ENCODE measurements at regions of chr9 and their contacts with region 1.

Region 1: GRCh38 chr9:6757456-6758247 is at the start of gene KDM4C:
- DNase-seq: peak; percentile 90 to 96
- ATAC-seq: peak; percentile 88 to 92
- H3K4me3 ChIP-seq: peak within 1 kb of the TSS; percentile 81 to 100 (median 94)
- H3K27ac ChIP-seq: peak within 1 kb of the TSS; percentile 94 to 100 (median 98)
- H3K4me1 ChIP-seq: peaks cover 6 to 10% of the 10 kb centered on the region in 2 donors
- H3K27me3 ChIP-seq: no peaks in the 10 kb centered on the region
- CTCF ChIP-seq: peak in 2 of 5 experiments; percentile 40 to 63
- POLR2A ChIP-seq: peak; percentile 88 to 97
- total RNA-seq, gene KDM4C: 7.7 to 23.3 (median 10.0) TPM

Region 2: GRCh38 chr9:6015278-6016157 is 742.1 kb before region 1 on chr9 and contains the start of gene RANBP6:
- in situ Hi-C with region 1: no loop called
- intact Hi-C with region 1: loop called (anchors 2 kb)
- DNase-seq: peak; percentile 85 to 86
- ATAC-seq: peak; percentile 98
- H3K4me3 ChIP-seq: peak within 1 kb of the TSS; percentile 73 to 89 (median 88)
- H3K27ac ChIP-seq: peak within 1 kb of the TSS; percentile 83 to 91 (median 86)
- H3K4me1 ChIP-seq: peaks cover 43 to 47% of the 10 kb centered on the region in 2 donors
- H3K27me3 ChIP-seq: no peaks in the 10 kb centered on the region
- CTCF ChIP-seq: no peak
- POLR2A ChIP-seq: peak; percentile 20 to 68
- total RNA-seq, gene RANBP6: 8.1 to 21.0 (median 16.9) TPM

Region 3: DNA sequence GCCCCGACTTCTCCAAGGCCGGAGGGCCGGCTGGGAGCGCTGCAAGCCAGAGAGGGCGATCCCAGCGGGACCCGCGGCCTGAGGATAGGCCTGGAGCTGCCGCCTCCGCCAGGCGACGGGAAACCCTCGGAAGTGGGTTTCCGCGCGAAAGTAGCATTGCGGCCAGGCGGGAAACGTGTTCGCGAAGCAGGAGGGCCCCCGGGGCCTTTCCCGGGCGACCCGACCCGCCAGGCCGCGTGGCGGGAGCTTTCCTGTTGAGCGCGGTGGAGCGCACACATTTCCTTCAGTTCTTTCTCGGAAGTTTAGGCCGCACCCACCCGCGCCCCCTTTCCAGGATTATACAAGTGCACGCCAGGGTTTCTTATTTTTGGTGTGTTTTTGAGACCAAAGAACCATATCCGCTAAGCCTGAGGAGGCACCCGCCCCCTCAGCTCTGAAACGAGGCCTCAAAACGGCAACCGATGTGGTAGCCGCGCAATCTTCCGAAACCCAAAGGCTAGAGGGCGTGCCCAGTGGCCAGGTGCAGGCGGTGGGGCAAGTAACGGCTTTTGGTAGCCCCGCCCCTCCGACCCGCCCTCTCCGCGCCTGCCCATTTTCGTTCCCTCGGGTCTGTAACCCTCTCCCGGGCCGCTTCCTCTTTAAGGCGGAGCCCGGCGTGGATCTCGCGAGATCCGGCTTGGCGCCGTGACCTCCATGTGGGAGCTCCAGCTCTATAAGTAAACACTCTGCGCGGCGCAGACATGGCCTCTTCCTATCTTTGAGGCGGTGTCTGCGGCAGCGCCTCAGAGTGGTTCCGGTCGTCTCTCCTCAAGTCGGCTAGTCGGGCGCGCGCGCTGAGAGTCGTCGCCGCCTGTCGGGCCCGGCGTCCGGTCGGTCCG is 344.9 kb before region 1 on chr9 and contains the start of gene UHRF2:
- in situ Hi-C with region 1: no loop called
- intact Hi-C with region 1: loop called (anchors 2 kb)
- DNase-seq: peak; percentile 96 to 98
- ATAC-seq: peak; percentile 95 to 96
- H3K4me3 ChIP-seq: peak within 1 kb of the TSS; percentile 80 to 86 (median 84)
- H3K27ac ChIP-seq: peak within 1 kb of the TSS; percentile 80 to 86 (median 83)
- H3K4me1 ChIP-seq: peaks cover 18 to 21% of the 10 kb centered on the region in 2 donors
- H3K27me3 ChIP-seq: no peaks in the 10 kb centered on the region
- CTCF ChIP-seq: peak in 1 of 5 experiments; percentile 15
- POLR2A ChIP-seq: peak; percentile 62 to 89
- total RNA-seq, gene UHRF2: 16.7 to 29.0 (median 18.8) TPM

Region 4: DNA sequence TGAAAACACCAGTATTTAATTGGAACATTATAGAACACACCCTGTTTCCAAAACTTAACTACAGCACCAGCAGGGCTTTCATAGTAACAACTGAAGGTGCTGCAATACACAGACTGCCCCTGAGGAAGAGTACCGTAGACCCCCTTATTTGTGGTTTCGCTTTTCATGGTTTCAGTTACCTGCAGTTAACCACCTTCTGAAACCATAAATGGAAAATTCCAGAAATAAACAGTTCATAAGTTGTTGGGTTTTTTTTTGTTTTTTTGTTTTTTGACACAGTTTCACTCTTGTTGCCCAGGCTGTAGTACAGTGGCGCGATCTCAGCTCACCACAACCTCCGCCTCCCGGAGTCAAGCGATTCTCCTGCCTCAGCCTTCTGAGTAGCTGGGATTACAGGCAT is 102.6 kb before region 1 on chr9:
- in situ Hi-C with region 1: no loop called
- intact Hi-C with region 1: no loop called
- DNase-seq: no peak
- ATAC-seq: no peak
- H3K4me3 ChIP-seq: no peak overlapping the region
- H3K27ac ChIP-seq: no peak overlapping the region
- H3K4me1 ChIP-seq: no peaks in the 10 kb centered on the region
- H3K27me3 ChIP-seq: no peaks in the 10 kb centered on the region
- CTCF ChIP-seq: no peak
- POLR2A ChIP-seq: no peak

Region 5: DNA sequence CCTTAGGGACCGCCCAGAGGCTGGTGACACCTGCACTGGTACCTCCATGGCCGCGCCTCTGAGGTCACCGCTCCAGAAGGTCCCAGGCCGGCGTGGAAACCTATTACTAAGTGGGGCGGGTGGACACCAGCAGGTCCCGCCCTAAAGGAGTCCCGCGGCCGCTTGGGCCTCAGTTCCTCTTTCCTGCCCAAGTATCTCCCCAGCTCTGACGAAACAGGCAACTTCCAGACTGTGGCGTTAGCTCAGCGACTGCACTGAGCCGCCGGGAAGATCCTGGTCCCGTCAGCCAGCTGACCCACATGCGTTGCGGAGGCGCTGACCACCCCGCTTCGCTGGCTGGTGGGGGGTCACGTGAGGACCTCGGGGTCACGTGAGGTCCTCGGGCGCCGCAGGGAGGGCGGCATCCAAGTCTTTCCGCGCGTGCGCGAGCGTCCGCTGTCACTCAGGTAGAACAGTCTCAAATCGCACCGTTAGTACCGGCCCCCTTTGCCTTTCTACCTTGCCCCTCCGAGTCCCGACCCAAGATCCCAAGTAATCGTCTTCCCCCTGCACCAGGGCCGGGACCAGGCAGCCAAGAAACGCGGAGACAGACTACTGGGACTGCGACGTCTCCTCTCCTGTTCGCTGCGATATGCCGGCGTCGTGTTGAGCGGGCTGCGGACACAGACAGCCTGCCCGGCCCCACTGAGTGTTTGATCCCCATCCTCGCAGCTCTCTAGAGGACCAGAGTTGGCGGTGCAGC is 53.6 kb before region 1 on chr9:
- in situ Hi-C with region 1: no loop called
- intact Hi-C with region 1: loop called (anchors 1 kb)
- DNase-seq: peak; percentile 51 to 82
- ATAC-seq: peak; percentile 93 to 97
- H3K4me3 ChIP-seq: peak overlapping the region; percentile 57 to 70 (median 64)
- H3K27ac ChIP-seq: peak overlapping the region; percentile 79 to 89 (median 80)
- H3K4me1 ChIP-seq: peaks cover 0 to 4% of the 10 kb centered on the region in 2 donors
- H3K27me3 ChIP-seq: no peaks in the 10 kb centered on the region
- CTCF ChIP-seq: no peak
- POLR2A ChIP-seq: peak; percentile 59 to 67

Region 6: GRCh38 chr9:6782981-6783380 is 25.3 kb after region 1 on chr9:
- in situ Hi-C with region 1: no loop called
- intact Hi-C with region 1: loop called (anchors 2 kb)
- DNase-seq: no peak
- ATAC-seq: no peak
- H3K4me3 ChIP-seq: no peak overlapping the region
- H3K27ac ChIP-seq: no peak overlapping the region
- H3K4me1 ChIP-seq: peaks cover 40 to 48% of the 10 kb centered on the region in 2 donors
- H3K27me3 ChIP-seq: no peaks in the 10 kb centered on the region
- CTCF ChIP-seq: no peak
- POLR2A ChIP-seq: no peak

Region 7: DNA sequence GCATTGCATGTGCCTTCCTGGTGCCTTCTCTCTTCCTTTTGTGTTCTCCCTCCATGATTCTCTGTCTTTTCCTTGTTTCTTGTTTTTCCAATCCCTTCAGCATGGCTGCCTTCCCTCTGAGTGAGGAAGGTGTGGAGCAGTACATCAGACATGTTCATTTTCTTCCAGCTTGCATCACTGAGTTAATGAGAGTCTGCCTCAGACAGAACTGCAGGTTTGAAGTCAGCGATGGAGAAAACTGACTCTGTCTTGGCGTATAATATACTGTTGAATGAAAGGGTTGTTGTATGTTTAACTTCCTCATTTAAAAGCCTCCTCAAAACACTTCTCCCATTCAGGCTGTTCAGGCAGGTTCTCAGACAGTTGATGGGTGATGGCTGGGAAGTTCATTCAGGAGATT is 129.4 kb after region 1 on chr9:
- in situ Hi-C with region 1: no loop called
- intact Hi-C with region 1: no loop called
- DNase-seq: no peak
- ATAC-seq: no peak
- H3K4me3 ChIP-seq: no peak overlapping the region
- H3K27ac ChIP-seq: no peak overlapping the region
- H3K4me1 ChIP-seq: no peaks in the 10 kb centered on the region
- H3K27me3 ChIP-seq: no peaks in the 10 kb centered on the region
- CTCF ChIP-seq: no peak
- POLR2A ChIP-seq: no peak